ENCODE measurements at regions of chr6 and their contacts with region 1.

Region 1: GRCh38 chr6:149431905-149432775 is 32.1 kb downstream of the SUMO4 start:
- DNase-seq: peak; percentile 94
- ATAC-seq: peak; percentile 97

Region 2: DNA sequence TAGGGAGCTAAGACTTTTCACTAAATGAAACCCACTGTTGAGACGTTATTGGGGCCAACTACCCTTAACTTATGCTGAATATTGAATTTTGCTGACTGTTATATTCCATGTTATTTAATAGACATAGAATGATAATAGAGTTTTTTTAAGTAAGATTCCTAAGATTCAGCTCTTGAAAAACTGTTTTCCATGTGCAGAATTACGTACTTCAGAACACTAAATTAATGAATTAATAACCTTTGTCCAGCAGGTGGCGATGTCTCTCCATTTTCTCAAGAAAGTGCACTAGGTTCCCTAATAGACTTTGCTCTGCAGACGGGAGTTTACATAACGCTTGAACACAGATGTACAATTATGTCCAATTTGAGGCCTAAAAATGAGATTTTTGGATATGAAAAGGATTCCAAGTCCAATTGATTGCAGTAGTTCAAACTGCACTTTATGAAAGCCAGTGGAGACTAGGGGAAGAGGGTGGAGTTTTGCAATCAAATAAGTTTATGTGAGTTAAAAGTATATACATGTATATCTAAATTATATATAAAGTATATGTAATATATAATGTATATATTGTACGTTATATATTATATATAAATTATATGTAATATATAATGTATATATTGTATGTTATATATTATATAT is 403.3 kb before region 1 on chr6:
- intact Hi-C with region 1: loop called (anchors 2 kb)
- DNase-seq: no peak
- ATAC-seq: peak; percentile 81

Region 3: GRCh38 chr6:149082286-149082707 is 349.8 kb before region 1 on chr6:
- intact Hi-C with region 1: loop called (anchors 5 kb)
- DNase-seq: peak; percentile 86
- ATAC-seq: peak; percentile 60

Region 4: DNA sequence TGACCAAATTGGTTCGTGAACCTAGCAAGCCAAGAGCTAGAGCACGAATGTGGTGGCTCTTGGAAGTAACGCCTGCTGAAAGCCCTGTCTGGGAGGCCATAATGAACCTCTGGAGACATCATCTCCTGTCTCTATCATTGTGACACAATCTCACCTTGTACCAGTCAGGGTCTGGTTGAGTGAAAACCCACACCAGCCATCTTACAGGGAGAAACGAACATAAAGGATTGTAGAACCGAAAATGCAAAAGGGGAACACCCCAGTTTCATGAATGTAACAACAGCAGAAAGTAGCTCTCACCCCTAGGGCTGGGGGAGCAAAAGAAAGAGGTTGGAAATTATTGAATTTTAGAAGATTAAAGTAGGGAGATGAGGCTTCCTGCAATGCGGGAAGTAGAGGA is 165.5 kb before region 1 on chr6:
- intact Hi-C with region 1: no loop called
- DNase-seq: no peak
- ATAC-seq: no peak